Natural killer cell (primary cell): ENCODE measurements at regions of chr10 and their contacts with region 1.

Region 1: DNA sequence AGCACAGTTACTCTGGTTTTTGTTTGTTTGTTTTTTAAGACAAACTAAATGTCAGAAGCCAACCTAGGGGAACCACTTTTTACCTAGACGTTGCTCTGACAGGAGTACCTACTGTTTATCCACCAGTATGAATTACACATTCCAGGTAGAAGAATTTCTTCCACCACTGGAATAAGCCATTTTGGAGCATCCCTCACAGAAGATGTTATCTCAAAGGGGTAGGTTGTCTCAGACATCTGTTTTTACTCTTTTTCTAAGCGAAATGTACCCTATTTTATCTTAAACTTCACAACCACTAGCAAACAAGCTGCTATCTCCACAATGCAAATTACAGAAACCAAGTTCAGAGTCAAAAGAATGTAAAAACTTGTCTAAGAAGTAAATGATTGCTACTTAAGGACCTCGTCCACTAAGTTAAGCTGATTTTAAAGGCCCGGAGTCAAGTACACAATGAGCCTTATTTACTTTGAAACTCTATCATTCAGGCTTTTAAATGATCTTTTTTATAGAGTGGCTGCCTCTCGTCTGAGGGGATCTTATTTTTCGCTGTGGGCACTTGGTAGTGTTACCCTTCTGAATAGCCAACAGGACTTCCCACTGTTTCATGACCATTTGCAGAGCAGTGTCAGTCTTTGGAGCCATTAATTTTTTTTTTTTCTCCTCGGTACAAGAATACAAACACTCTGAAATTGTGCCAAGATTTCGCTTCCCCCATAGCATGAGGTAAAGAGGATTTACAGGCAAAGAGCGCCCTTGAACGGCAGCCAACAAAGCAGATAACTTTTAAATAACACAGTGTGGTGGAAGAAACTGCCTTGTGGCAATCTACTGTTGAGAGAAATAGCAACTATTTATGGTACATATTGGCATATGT is 15.7 kb upstream of the ARMC3 start:
- DNase-seq: no peak
- ATAC-seq: peak in 2 of 3 donors; percentile 9 to 27
- H3K4me3 ChIP-seq: no peak overlapping the region
- H3K4me3 Mint-ChIP-seq: peak overlapping the region; percentile 62
- H3K27ac ChIP-seq: peak overlapping the region; percentile 88
- H3K27ac Mint-ChIP-seq: peak overlapping the region; percentile 85 to 92
- H3K4me1 ChIP-seq: peaks cover 8% of the 10 kb centered on the region
- H3K4me1 Mint-ChIP-seq: peaks cover 26 to 34% of the 10 kb centered on the region in 2 donors
- H3K27me3 ChIP-seq: no peaks in the 10 kb centered on the region
- H3K27me3 Mint-ChIP-seq: no peaks in the 10 kb centered on the region
- CTCF ChIP-seq: no peak

Region 2: GRCh38 chr10:22003079-22003913 is 908.8 kb before region 1 on chr10 and contains the start of gene DNAJC1:
- intact Hi-C with region 1: loop called (anchors 1 kb)
- DNase-seq: peak; percentile 96 to 98
- ATAC-seq: peak; percentile 84 to 96 (median 89)
- H3K4me3 ChIP-seq: peak within 1 kb of the TSS; percentile 96
- H3K4me3 Mint-ChIP-seq: peak within 1 kb of the TSS; percentile 91
- H3K27ac ChIP-seq: peak within 1 kb of the TSS; percentile 97
- H3K27ac Mint-ChIP-seq: peak within 1 kb of the TSS; percentile 85 to 88
- H3K4me1 ChIP-seq: peaks cover 4% of the 10 kb centered on the region
- H3K4me1 Mint-ChIP-seq: peaks cover 38 to 45% of the 10 kb centered on the region in 2 donors
- H3K27me3 ChIP-seq: no peaks in the 10 kb centered on the region
- H3K27me3 Mint-ChIP-seq: peaks cover 0 to 5% of the 10 kb centered on the region in 2 donors
- CTCF ChIP-seq: peak; percentile 9
- total RNA-seq, gene DNAJC1: 38.4 to 63.7 (median 50.6) TPM

Region 3: DNA sequence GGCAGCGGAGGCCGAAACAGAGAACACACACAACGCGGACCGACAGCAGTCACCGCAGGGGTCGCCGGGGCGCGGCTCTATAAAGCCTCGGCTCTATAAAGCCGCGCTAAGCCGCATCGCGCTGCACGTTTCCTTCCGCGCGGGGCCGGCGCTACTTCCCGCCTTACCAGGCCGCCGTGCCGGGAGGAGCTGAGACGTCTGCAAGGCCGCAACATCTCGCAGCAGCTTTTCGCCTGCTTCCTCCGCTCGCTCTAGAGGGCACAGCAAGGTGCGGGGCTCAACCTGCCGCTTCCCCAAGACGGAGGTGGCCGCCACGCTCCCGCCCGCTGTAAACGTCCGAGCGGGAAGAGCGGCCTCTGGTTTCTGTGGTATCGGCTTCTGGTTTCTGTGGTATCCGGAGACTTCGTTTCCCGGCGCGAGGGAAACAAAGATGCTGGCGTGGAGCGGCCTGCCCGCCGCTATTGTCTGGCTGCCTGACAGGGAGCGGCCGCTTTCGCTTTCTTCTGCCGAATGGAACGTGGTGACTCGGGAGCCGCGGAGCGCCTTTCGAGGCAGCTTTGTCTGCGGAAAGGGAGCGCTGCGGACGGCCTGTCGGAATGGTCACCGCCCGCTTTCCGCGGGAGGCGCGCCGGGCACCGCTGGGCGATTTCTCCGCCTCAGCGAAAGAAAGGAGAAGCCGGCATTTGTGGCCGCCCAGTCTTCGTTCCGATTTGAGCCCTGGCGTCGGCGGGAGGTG is 475.1 kb before region 1 on chr10:
- intact Hi-C with region 1: loop called (anchors 5 kb)
- DNase-seq: peak; percentile 86 to 95
- ATAC-seq: peak; percentile 80 to 93 (median 85)
- H3K4me3 ChIP-seq: peak overlapping the region; percentile 73
- H3K4me3 Mint-ChIP-seq: peak overlapping the region; percentile 95
- H3K27ac ChIP-seq: peak overlapping the region; percentile 98
- H3K27ac Mint-ChIP-seq: peak overlapping the region; percentile 97
- H3K4me1 ChIP-seq: peaks cover 23% of the 10 kb centered on the region
- H3K4me1 Mint-ChIP-seq: peaks cover 37 to 43% of the 10 kb centered on the region in 2 donors
- H3K27me3 ChIP-seq: peaks cover 2% of the 10 kb centered on the region
- H3K27me3 Mint-ChIP-seq: no peaks in the 10 kb centered on the region
- CTCF ChIP-seq: no peak

Region 4: DNA sequence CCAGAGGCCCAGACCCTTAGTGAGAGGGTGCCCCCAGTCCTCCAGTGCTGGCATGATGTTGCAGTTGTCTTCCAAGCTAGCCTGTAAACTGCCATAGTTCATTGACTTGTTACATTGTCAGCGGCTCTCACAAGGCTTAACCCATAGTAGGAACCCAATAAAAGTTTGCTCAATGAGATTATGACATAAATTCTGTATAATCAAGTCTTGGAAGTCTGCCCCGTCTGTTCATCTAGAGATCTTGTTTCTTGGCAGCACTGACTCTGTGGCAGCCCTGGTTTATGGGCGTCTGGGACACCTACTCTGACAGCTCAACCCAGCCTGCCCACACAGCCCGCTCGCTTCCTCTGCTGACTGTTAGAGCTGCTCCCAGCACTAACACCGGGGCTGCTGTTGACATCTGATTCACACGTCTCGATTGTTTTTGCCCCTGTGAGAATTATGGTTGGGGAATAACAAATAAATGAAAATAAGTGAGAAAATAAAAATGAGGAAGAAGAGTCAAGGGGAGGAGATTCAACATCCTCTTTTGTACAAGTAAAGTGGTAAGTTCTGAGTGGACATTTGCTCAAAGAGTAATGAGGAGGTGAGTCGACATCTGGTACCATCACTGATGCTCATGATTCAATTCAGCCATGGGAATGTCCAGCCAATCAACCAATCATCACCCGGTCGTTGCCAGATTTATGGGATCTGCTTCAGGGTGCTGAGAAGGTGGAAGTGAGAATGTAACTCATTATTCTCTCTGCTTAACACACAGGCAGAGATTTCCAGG is 406.0 kb before region 1 on chr10:
- intact Hi-C with region 1: loop called (anchors 5 kb)
- DNase-seq: peak; percentile 72 to 81
- ATAC-seq: peak; percentile 93 to 99 (median 99)
- H3K4me3 ChIP-seq: no peak overlapping the region
- H3K4me3 Mint-ChIP-seq: peak overlapping the region; percentile 85
- H3K27ac ChIP-seq: peak overlapping the region; percentile 54
- H3K27ac Mint-ChIP-seq: peak overlapping the region; percentile 86 to 89
- H3K4me1 ChIP-seq: peaks cover 32% of the 10 kb centered on the region
- H3K4me1 Mint-ChIP-seq: peaks cover 63 to 67% of the 10 kb centered on the region in 2 donors
- H3K27me3 ChIP-seq: no peaks in the 10 kb centered on the region
- H3K27me3 Mint-ChIP-seq: peaks cover 0 to 7% of the 10 kb centered on the region in 2 donors
- CTCF ChIP-seq: no peak

Region 5: GRCh38 chr10:22597138-22597537 is 315.0 kb before region 1 on chr10:
- intact Hi-C with region 1: loop called (anchors 1 kb)
- DNase-seq: peak; percentile 61 to 79
- ATAC-seq: peak; percentile 89 to 98 (median 97)
- H3K4me3 ChIP-seq: no peak overlapping the region
- H3K4me3 Mint-ChIP-seq: peak overlapping the region; percentile 85
- H3K27ac ChIP-seq: peak overlapping the region; percentile 79
- H3K27ac Mint-ChIP-seq: peak overlapping the region; percentile 99
- H3K4me1 ChIP-seq: peaks cover 76% of the 10 kb centered on the region
- H3K4me1 Mint-ChIP-seq: peaks cover 82 to 84% of the 10 kb centered on the region in 2 donors
- H3K27me3 ChIP-seq: no peaks in the 10 kb centered on the region
- H3K27me3 Mint-ChIP-seq: no peaks in the 10 kb centered on the region
- CTCF ChIP-seq: no peak

Region 6: DNA sequence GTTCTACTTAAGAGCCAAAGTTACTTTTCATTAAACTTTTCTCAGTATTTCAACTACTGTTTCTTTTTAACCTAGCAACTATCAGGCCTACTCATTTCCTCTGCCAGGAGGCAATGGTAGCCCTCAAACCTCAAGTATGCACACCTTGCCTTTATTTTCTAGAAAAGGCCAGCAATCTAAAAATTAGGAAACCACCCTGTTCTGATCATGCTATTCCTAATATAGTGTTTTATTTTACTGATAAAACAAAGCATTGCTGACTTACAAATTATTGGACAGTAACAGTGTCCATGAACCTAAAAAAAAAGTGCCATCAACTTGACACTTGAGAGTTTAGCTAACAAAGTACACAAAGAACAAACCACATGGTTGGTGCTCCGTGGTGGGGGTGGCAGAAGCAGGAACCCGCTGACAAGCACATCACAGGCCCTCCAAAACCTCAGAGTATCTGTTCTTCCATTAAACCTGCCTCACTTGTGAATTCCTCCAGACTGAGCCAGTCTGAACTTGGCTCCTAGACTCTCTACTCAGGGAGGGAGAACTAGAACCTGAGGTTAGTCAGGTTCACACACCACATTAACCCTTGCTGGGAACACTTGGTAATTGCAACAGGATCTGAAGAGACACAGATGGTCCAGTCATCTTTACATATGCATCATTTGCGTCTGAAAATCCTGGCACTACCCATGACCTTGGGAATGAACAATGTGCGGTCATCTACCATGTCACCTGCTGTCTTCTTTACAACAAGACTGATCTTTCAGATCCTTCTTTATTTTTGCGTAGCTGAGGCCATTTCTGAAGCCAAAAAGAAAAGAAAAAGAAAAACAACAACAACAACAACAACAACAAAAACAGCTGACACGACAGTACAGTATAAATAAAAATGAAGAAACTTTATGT is 229.6 kb before region 1 on chr10:
- intact Hi-C with region 1: loop called (anchors 1 kb)
- DNase-seq: peak; percentile 62 to 84
- ATAC-seq: peak; percentile 46 to 76 (median 71)
- H3K4me3 ChIP-seq: no peak overlapping the region
- H3K4me3 Mint-ChIP-seq: peak overlapping the region; percentile 85
- H3K27ac ChIP-seq: peak overlapping the region; percentile 94
- H3K27ac Mint-ChIP-seq: peak overlapping the region; percentile 92 to 99
- H3K4me1 ChIP-seq: peaks cover 63% of the 10 kb centered on the region
- H3K4me1 Mint-ChIP-seq: peaks cover 86 to 90% of the 10 kb centered on the region in 2 donors
- H3K27me3 ChIP-seq: no peaks in the 10 kb centered on the region
- H3K27me3 Mint-ChIP-seq: no peaks in the 10 kb centered on the region
- CTCF ChIP-seq: no peak

Region 7: GRCh38 chr10:22742678-22743077 is 169.4 kb before region 1 on chr10:
- intact Hi-C with region 1: no loop called
- DNase-seq: no peak
- ATAC-seq: peak in 2 of 3 donors; percentile 33 to 52
- H3K4me3 ChIP-seq: no peak overlapping the region
- H3K4me3 Mint-ChIP-seq: no peak overlapping the region
- H3K27ac ChIP-seq: no peak overlapping the region
- H3K27ac Mint-ChIP-seq: no peak overlapping the region
- H3K4me1 ChIP-seq: no peaks in the 10 kb centered on the region
- H3K4me1 Mint-ChIP-seq: peaks cover 0 to 5% of the 10 kb centered on the region in 2 donors
- H3K27me3 ChIP-seq: no peaks in the 10 kb centered on the region
- H3K27me3 Mint-ChIP-seq: peaks cover 0 to 3% of the 10 kb centered on the region in 2 donors
- CTCF ChIP-seq: no peak

Region 8: GRCh38 chr10:22927661-22928403 is 15.7 kb after region 1 on chr10 and contains the start of gene ARMC3:
- intact Hi-C with region 1: loop called (anchors 1 kb)
- DNase-seq: peak; percentile 78 to 85
- ATAC-seq: peak; percentile 84 to 95 (median 93)
- H3K4me3 ChIP-seq: peak within 1 kb of the TSS; percentile 35
- H3K4me3 Mint-ChIP-seq: no peak within 1 kb of the TSS
- H3K27ac ChIP-seq: no peak within 1 kb of the TSS
- H3K27ac Mint-ChIP-seq: no peak within 1 kb of the TSS
- H3K4me1 ChIP-seq: peaks cover 11% of the 10 kb centered on the region
- H3K4me1 Mint-ChIP-seq: no peaks in the 10 kb centered on the region
- H3K27me3 ChIP-seq: peaks cover 11% of the 10 kb centered on the region
- H3K27me3 Mint-ChIP-seq: peaks cover 0 to 3% of the 10 kb centered on the region in 2 donors
- CTCF ChIP-seq: no peak
- total RNA-seq, gene ARMC3: 0.65 to 0.68 TPM in 2 of 3 donors, not detected in the other